ENCODE measurements at regions of chr1 and their contacts with region 1.

Region 1: DNA sequence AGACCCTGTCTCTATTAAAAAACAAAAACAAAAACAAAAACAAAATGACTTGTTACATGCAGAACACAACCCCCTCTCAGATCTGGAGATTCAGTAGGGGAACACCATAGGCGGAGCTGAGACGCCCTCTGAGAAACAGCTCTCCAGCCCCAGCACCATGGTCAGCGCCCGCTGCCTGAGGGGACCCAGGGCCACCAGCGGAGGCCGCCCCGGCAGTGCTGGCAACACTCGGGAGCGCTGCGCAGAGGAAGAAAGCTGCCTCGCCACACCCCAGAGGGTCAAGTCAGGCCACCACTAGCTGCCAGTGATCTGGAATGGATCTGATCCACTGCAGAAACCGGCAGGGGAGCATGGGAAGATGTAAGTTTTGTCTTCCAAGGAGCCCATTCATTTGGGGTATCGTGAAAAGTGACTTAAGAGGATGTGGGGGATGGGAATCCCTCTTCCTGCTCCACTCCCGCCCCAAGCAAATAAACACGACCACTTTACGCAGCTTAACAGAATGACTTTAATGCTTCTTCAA is 3.1 kb downstream of the ACTA1 start:
- DNase-seq: peak; percentile 36
- H3K4me3 ChIP-seq: no peak overlapping the region
- H3K27ac ChIP-seq: no peak overlapping the region
- H3K4me1 ChIP-seq: peaks cover 22% of the 10 kb centered on the region
- H3K27me3 ChIP-seq: no peaks in the 10 kb centered on the region
- CTCF ChIP-seq: no peak
- POLR2A ChIP-seq: no peak

Region 2: GRCh38 chr1:229309684-229310083 is 121.1 kb before region 1 on chr1:
- intact Hi-C with region 1: loop called (anchors 5 kb)
- DNase-seq: no peak
- H3K4me3 ChIP-seq: no peak overlapping the region
- H3K27ac ChIP-seq: no peak overlapping the region
- H3K4me1 ChIP-seq: no peaks in the 10 kb centered on the region
- H3K27me3 ChIP-seq: no peaks in the 10 kb centered on the region
- CTCF ChIP-seq: no peak
- POLR2A ChIP-seq: no peak

Region 3: DNA sequence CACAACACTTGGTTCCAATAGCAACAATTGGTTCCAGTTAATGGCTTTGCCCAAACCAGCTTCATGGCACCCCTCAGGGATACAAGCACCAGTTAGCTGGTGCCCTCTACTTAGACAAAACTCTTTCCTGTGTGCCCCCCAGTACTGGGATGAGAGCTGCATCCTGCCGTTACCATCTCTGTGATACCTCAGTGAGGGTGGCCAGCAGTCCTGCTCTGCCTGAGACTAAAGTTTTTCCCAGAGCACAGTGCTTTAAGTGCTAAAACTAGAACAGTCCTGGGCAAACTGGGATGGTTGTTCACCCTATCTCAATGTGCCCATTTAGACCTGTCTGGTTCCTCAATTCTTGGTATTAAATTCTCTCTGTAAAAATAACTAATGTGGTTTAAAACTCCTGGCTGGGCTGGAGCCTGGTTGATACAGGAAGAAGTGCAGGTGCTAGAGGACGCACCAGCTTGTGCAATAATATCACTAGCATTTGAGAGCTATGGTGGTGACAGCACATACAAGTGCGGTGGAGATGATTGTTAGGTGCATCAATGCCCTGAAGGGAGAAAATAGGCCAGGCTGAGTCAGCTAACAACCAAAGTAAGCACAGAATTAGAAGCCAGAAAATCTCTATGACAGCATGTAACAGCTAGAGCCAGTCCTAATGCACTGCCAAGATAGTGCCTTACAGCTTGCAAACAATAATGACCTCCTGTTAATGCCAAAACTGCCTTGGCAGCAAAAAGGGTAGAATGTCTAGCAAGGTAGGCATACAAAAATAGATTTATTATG is 456.4 kb after region 1 on chr1:
- intact Hi-C with region 1: no loop called
- DNase-seq: no peak
- H3K4me3 ChIP-seq: no peak overlapping the region
- H3K27ac ChIP-seq: no peak overlapping the region
- H3K4me1 ChIP-seq: peaks cover 9% of the 10 kb centered on the region
- H3K27me3 ChIP-seq: no peaks in the 10 kb centered on the region
- CTCF ChIP-seq: no peak
- POLR2A ChIP-seq: no peak